HEK293 (cell line): ENCODE measurements at regions of chr17 and their contacts with region 1.

Region 1: GRCh38 chr17:48543107-48543853 is 1.6 kb downstream of the HOXB2 start:
- H3K4me3 ChIP-seq: peak overlapping the region; percentile 79
- H3K27ac ChIP-seq: peak overlapping the region; percentile 100
- H3K4me1 ChIP-seq: peaks cover 36% of the 10 kb centered on the region
- CTCF ChIP-seq: peak; percentile 61

Region 2: DNA sequence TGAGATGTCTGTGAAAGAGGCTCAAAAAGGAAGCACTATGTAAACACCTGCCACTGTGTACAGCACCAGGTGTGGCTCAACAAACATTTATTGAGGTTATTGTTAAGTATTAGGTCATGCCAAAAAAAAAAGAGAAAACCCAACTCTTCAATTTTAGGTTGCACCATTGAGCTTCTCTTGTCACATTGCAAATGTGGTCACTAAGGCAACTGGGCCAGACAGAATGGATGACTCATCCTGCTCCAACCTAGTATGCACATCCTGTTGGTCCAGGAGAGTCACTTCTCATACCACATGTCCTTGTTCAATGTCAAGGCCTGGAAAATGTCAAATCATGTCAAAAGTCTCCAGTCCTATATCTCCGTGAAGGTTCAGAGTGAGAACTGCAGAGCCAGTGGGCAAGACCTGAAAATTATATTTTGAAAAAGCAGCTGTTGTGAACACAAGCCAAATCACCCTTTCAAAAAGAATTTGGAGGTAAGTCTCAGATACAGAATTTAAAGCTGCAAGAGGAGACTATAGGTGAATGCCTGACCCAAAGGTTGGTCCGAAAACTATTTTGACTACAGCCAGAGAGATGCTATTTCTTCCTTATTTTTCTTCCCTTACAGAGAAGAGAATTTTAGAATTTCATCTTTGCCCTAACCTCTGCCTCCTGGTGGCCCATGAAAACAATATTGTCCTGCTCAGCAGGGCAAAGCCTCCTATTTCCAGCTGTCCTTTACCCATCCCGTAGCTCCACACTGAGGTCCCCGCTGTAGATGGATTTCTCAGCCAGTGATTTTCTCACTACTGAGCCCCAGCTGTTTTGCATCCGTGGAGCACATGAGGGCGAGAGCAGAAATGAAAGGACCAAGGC is 37.3 kb before region 1 on chr17:
- CTCF ChIA-PET with region 1: interaction called, 6 read pairs
- POLR2A ChIA-PET with region 1: interaction called, 10 read pairs
- H3K4me3 ChIP-seq: no peak overlapping the region
- H3K27ac ChIP-seq: no peak overlapping the region; the same call in 1 of the 2 replicates
- H3K4me1 ChIP-seq: peaks cover 24% of the 10 kb centered on the region
- CTCF ChIP-seq: no peak

Region 3: GRCh38 chr17:48522031-48522653 is 21.1 kb before region 1 on chr17:
- CTCF ChIA-PET with region 1: interaction called, 22 read pairs
- POLR2A ChIA-PET with region 1: interaction called, 5 read pairs
- H3K4me3 ChIP-seq: no peak overlapping the region
- H3K27ac ChIP-seq: no peak overlapping the region; the same call in 1 of the 2 replicates
- H3K4me1 ChIP-seq: peaks cover 14% of the 10 kb centered on the region
- CTCF ChIP-seq: no peak

Region 4: GRCh38 chr17:48555258-48556228 is 12.3 kb after region 1 on chr17:
- CTCF ChIA-PET with region 1: interaction called, 5 read pairs
- POLR2A ChIA-PET with region 1: interaction called, 25 read pairs
- H3K4me3 ChIP-seq: peak overlapping the region; percentile 44
- H3K27ac ChIP-seq: peak overlapping the region; percentile 97
- H3K4me1 ChIP-seq: peaks cover 58% of the 10 kb centered on the region
- CTCF ChIP-seq: no peak

Region 5: GRCh38 chr17:48577946-48578615 is 34.8 kb after region 1 on chr17 and contains the start of gene HOXB4:
- CTCF ChIA-PET with region 1: interaction called, 15 read pairs
- POLR2A ChIA-PET with region 1: interaction called, 14 read pairs
- H3K4me3 ChIP-seq: peak within 1 kb of the TSS; percentile 52
- H3K27ac ChIP-seq: peak within 1 kb of the TSS; percentile 93
- H3K4me1 ChIP-seq: peaks cover 68% of the 10 kb centered on the region
- CTCF ChIP-seq: no peak

Region 6: GRCh38 chr17:48586355-48587258 is 43.3 kb after region 1 on chr17:
- CTCF ChIA-PET with region 1: interaction called, 15 read pairs
- POLR2A ChIA-PET with region 1: interaction called, 9 read pairs
- H3K4me3 ChIP-seq: peak overlapping the region; percentile 38
- H3K27ac ChIP-seq: peak overlapping the region; percentile 92
- H3K4me1 ChIP-seq: peaks cover 50% of the 10 kb centered on the region
- CTCF ChIP-seq: no peak